Activated T-helper 1 cell treated with anti-CD3 and anti-CD28 coated beads, Interleukin-12 subunit alpha, Interleukin-12 subunit beta, Interleukin-2, Interleukin-4 antibody, amounts not matched to agents 30 ng/mL and 10 ng/mL and 1 ng/mL, durations not matched to agents 14 hours and 24 hours and 36 hours (primary cell): ENCODE measurements at regions of chr11 and their contacts with region 1.

Region 1: DNA sequence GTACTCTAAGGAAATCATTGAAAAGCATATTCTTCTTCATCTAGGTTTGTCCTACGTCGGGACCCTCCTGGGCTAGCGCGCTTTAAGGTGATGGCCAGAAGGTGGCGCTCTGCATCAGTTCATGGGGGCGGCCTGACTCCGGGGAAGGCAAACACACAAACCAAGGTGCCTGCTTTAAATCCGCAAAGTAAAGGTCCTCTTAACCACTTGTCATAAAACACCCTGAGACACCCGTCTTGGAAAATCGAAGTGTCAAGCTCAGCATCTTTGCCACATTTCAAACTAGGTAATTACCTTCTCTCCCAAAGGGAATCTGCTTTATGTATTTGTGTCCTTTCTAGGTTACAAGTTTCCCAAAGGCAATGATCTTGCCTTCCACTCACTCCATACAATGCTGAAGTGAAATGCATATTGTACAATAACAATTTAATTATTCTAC is 33.9 kb downstream of the LMO2 start:
- DNase-seq: peak; percentile 44
- H3K4me3 Mint-ChIP-seq: no peak overlapping the region
- H3K27ac Mint-ChIP-seq: no peak overlapping the region
- H3K4me1 Mint-ChIP-seq: no peaks in the 10 kb centered on the region
- H3K27me3 Mint-ChIP-seq: peaks cover 46% of the 10 kb centered on the region

Region 2: DNA sequence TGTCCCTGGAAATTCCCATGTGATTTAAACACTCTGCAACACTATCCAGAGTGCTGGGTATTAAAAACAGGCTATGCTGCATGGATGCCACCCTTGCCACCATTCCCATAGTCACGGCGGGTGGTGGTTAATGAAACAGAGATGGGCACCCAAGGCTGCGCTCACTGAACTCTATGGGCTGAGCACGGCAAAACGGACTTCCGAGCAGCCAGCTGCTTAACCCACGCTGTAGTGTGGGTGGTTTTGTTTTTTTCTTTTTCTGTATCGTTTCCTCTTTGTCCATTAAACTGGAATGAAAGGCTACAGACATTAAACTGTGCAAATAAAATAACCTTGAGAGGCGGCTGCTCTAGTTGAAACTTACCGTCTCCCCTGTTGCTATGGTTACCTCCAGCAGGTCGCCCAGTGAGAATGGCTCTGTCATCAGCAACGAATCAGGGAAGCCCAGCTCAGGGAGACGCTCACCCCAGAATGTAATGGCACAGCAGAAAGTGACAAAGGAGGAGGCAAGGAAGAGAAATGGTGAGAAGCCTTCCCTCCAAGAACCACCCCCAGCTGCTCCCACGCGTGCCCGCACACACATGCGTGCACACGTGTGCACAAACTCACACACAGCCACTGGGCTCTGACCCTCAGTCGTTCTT is 259.4 kb before region 1 on chr11:
- intact Hi-C with region 1: no loop called
- DNase-seq: no peak
- H3K4me3 Mint-ChIP-seq: no peak overlapping the region
- H3K27ac Mint-ChIP-seq: no peak overlapping the region
- H3K4me1 Mint-ChIP-seq: no peaks in the 10 kb centered on the region
- H3K27me3 Mint-ChIP-seq: peaks cover 5% of the 10 kb centered on the region

Region 3: GRCh38 chr11:33970984-33971466 is 113.1 kb after region 1 on chr11:
- intact Hi-C with region 1: loop called (anchors 1 kb)
- DNase-seq: no peak
- H3K4me3 Mint-ChIP-seq: no peak overlapping the region
- H3K27ac Mint-ChIP-seq: no peak overlapping the region
- H3K4me1 Mint-ChIP-seq: no peaks in the 10 kb centered on the region
- H3K27me3 Mint-ChIP-seq: peaks cover 12% of the 10 kb centered on the region

Region 4: GRCh38 chr11:33987975-33988580 is 130.1 kb after region 1 on chr11:
- intact Hi-C with region 1: loop called (anchors 1 kb)
- DNase-seq: peak; percentile 63
- H3K4me3 Mint-ChIP-seq: no peak overlapping the region
- H3K27ac Mint-ChIP-seq: no peak overlapping the region
- H3K4me1 Mint-ChIP-seq: peaks cover 6% of the 10 kb centered on the region
- H3K27me3 Mint-ChIP-seq: peaks cover 3% of the 10 kb centered on the region

Region 5: DNA sequence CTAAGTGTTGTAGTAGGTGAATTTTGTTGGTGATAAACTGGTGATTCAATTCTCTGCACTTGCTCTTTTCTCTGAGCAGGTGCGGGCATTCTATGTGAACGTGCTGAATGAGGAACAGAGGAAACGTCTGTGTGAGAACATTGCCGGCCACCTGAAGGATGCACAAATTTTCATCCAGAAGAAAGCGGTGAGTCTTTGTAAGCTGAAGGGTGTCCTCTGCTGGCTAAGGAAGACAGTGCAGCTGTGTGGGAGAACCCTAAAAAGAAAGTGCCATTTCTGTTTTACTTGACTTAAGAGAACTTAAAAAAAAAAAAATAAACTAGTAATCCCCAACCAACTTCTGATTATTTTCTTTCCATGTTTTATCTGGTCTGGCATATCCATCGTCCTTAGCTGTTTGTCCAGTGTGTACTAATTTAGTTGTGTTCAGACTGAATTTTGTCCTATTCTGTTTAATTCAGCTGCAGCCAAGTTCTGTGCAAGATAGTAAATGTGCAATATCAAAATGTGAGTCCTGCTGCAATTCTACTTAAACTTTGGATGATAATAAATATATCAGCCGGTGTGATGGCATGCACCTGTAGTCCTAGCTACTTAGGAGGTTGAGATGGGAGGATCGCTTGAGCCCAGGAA is 610.4 kb after region 1 on chr11:
- intact Hi-C with region 1: loop called (anchors 5 kb)
- DNase-seq: peak; percentile 22
- H3K4me3 Mint-ChIP-seq: no peak overlapping the region
- H3K27ac Mint-ChIP-seq: no peak overlapping the region
- H3K4me1 Mint-ChIP-seq: peaks cover 6% of the 10 kb centered on the region
- H3K27me3 Mint-ChIP-seq: no peaks in the 10 kb centered on the region

Region 6: GRCh38 chr11:34492806-34493414 is 635.0 kb after region 1 on chr11:
- intact Hi-C with region 1: loop called (anchors 2 kb)
- DNase-seq: no peak
- H3K4me3 Mint-ChIP-seq: no peak overlapping the region
- H3K27ac Mint-ChIP-seq: no peak overlapping the region
- H3K4me1 Mint-ChIP-seq: no peaks in the 10 kb centered on the region
- H3K27me3 Mint-ChIP-seq: peaks cover 3% of the 10 kb centered on the region